CD8-positive, alpha-beta T cell (primary cell): ENCODE measurements at regions of chr11 and their contacts with region 1.

Region 1: GRCh38 chr11:95659088-95659487 is 130.5 kb downstream of the FAM76B start:
- DNase-seq: no peak
- ATAC-seq: no peak
- H3K4me3 ChIP-seq: no peak overlapping the region
- H3K4me3 Mint-ChIP-seq: no peak overlapping the region
- H3K27ac ChIP-seq: no peak overlapping the region
- H3K27ac Mint-ChIP-seq: no peak overlapping the region
- H3K4me1 ChIP-seq: peaks cover 10% of the 10 kb centered on the region
- H3K4me1 Mint-ChIP-seq: peaks cover 20% of the 10 kb centered on the region
- H3K27me3 ChIP-seq: no peaks in the 10 kb centered on the region
- H3K27me3 Mint-ChIP-seq: no peaks in the 10 kb centered on the region
- CTCF ChIP-seq: no peak

Region 2: GRCh38 chr11:95671768-95672167 is 12.7 kb after region 1 on chr11:
- CTCF ChIA-PET with region 1: interaction called, 3 read pairs
- POLR2A ChIA-PET with region 1: interaction called, 3 read pairs
- intact Hi-C with region 1: loop called in 1 of 2 experiments (anchors 1 kb)
- DNase-seq: no peak
- ATAC-seq: no peak
- H3K4me3 ChIP-seq: no peak overlapping the region
- H3K4me3 Mint-ChIP-seq: no peak overlapping the region
- H3K27ac ChIP-seq: no peak overlapping the region
- H3K27ac Mint-ChIP-seq: no peak overlapping the region
- H3K4me1 ChIP-seq: peaks cover 8% of the 10 kb centered on the region
- H3K4me1 Mint-ChIP-seq: peaks cover 8% of the 10 kb centered on the region
- H3K27me3 ChIP-seq: no peaks in the 10 kb centered on the region
- H3K27me3 Mint-ChIP-seq: no peaks in the 10 kb centered on the region
- CTCF ChIP-seq: no peak